Activated T-helper 1 cell treated with anti-CD3 and anti-CD28 coated beads, Interleukin-12 subunit alpha, Interleukin-12 subunit beta, Interleukin-2, Interleukin-4 antibody, amounts not matched to agents 30 ng/mL and 10 ng/mL and 1 ng/mL, durations not matched to agents 14 hours and 24 hours and 36 hours (primary cell): ENCODE measurements at regions of chr22 and their contacts with region 1.

Region 1: DNA sequence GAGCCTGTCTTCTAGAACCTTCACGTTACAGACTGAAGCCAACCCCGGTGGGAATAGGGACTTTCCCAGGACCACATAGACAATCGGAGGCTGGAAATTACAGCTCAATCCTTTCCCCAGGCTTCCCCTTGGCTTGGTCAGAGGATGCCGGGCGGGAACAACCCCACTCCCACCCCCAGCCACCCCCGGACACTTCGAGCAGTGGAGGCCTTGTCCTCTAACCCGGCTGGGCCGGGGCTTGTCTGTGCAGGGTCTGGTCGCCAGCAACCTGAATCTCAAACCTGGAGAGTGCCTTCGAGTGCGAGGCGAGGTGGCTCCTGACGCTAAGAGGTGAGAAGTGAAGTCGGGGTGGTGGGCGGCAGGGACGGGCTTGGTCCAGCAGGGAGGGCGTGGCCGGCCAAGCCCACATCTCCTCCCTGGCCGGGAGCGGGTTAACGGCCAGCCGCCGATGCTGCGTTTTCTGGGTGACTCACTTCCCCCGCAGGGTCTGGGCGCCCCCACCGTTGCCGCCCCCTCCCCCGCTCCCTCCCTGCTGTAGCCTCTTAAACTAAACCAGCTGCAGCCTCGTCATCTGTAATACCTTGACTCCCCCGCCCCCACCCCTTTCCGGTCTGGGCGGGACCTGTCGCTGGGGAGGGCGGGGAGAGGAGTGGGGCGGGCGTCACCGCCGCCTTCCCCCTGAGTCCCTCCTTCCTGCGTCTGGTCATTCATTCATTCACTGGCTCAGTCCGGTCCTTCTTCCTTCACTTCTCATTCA is 1.5 kb downstream of the LGALS1 start:
- DNase-seq: peak; percentile 89
- H3K4me3 Mint-ChIP-seq: peak overlapping the region; percentile 82
- H3K27ac Mint-ChIP-seq: peak overlapping the region; percentile 98
- H3K4me1 Mint-ChIP-seq: peaks cover 55% of the 10 kb centered on the region
- H3K27me3 Mint-ChIP-seq: no peaks in the 10 kb centered on the region

Region 2: DNA sequence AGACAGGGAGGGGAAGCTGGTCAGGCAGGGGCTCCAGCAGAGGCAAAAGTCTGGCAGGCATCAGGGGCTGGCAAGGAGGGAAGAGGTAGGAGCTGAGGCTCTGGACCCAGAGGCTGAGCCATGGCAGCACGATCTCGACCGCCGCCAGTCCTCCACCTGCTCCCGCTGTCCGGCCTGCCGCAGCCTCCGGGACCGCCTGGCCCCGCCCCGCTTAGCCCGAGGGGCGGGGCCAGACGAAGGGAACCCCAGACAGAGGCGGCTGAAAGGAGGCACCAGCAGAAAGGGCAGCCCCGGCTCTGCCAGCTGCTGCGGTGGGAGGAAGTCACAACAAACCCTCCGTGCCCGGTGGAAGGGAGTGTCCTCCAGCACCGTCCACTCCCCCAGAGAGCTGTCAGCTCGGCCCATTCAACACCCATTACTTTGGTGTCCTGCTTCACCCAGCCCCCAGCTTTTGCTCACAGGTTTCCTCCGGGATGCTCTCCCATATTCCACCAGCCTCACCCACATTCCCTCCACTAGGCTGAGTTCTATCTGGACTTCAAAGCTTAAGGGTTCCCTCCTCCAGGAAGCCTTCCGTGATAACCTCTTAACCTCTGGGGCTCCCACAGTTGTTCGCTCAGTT is 190.6 kb before region 1 on chr22 and contains the start of gene MFNG:
- intact Hi-C with region 1: loop called (anchors 5 kb)
- DNase-seq: peak; percentile 69
- H3K4me3 Mint-ChIP-seq: peak within 1 kb of the TSS; percentile 92
- H3K27ac Mint-ChIP-seq: peak within 1 kb of the TSS; percentile 93
- H3K4me1 Mint-ChIP-seq: peaks cover 44% of the 10 kb centered on the region
- H3K27me3 Mint-ChIP-seq: no peaks in the 10 kb centered on the region
- total RNA-seq, gene MFNG: 213 and 214 TPM in 2 replicates

Region 3: DNA sequence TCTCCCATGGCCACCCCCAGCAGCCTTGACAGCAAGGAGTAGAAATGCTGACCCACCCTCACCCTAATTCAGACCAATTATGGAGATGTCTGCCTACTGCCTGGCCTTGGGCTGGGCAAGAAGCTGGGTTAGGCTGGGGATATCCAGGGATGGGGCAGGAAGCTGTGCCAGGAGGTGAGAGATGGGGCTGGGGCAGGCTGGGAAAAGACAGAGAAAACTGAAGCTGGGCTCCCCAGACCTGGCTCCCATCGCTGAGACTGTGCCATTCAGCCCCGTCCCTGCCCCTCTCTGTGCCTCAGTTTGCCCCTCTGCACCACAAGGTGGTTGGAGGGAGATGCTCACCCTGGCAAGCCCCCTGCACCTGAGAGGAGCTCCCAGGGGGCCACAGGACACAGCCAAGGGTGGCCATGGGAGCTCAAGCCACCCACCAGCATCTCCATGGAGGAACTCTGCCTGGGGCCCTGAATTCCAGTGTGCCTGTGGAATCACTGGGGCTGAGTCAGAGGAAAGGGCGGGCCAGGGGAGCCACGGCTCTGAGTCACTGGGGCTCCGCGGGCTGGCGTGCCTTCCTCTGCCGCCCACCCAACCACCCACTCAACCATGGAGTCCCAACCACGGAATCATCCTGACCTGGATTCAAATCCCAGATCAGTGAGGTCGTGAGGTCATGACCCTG is 151.7 kb before region 1 on chr22:
- intact Hi-C with region 1: no loop called
- DNase-seq: no peak
- H3K4me3 Mint-ChIP-seq: no peak overlapping the region
- H3K27ac Mint-ChIP-seq: no peak overlapping the region
- H3K4me1 Mint-ChIP-seq: peaks cover 8% of the 10 kb centered on the region
- H3K27me3 Mint-ChIP-seq: peaks cover 32% of the 10 kb centered on the region

Region 4: GRCh38 chr22:37623075-37624016 is 53.6 kb before region 1 on chr22:
- intact Hi-C with region 1: loop called (anchors 1 kb)
- DNase-seq: peak; percentile 58
- H3K4me3 Mint-ChIP-seq: peak overlapping the region; percentile 37
- H3K27ac Mint-ChIP-seq: peak overlapping the region; percentile 70
- H3K4me1 Mint-ChIP-seq: peaks cover 37% of the 10 kb centered on the region
- H3K27me3 Mint-ChIP-seq: no peaks in the 10 kb centered on the region

Region 5: GRCh38 chr22:37658133-37659065 is 18.5 kb before region 1 on chr22 and contains the start of gene PDXP:
- intact Hi-C with region 1: loop called (anchors 1 kb)
- DNase-seq: peak; percentile 99
- H3K4me3 Mint-ChIP-seq: peak within 1 kb of the TSS; percentile 89
- H3K27ac Mint-ChIP-seq: peak within 1 kb of the TSS; percentile 91
- H3K4me1 Mint-ChIP-seq: peaks cover 43% of the 10 kb centered on the region
- H3K27me3 Mint-ChIP-seq: no peaks in the 10 kb centered on the region
- total RNA-seq, gene PDXP: 47.0 and 50.4 TPM in 2 replicates

Region 6: GRCh38 chr22:37807410-37808293 is 130.7 kb after region 1 on chr22 and contains the start of gene GCAT:
- intact Hi-C with region 1: loop called (anchors 2 kb)
- DNase-seq: peak; percentile 90
- H3K4me3 Mint-ChIP-seq: peak within 1 kb of the TSS; percentile 82
- H3K27ac Mint-ChIP-seq: peak within 1 kb of the TSS; percentile 58
- H3K4me1 Mint-ChIP-seq: peaks cover 44% of the 10 kb centered on the region
- H3K27me3 Mint-ChIP-seq: peaks cover 13% of the 10 kb centered on the region
- total RNA-seq, gene GCAT: 28.5 and 28.9 TPM in 2 replicates

Region 7: DNA sequence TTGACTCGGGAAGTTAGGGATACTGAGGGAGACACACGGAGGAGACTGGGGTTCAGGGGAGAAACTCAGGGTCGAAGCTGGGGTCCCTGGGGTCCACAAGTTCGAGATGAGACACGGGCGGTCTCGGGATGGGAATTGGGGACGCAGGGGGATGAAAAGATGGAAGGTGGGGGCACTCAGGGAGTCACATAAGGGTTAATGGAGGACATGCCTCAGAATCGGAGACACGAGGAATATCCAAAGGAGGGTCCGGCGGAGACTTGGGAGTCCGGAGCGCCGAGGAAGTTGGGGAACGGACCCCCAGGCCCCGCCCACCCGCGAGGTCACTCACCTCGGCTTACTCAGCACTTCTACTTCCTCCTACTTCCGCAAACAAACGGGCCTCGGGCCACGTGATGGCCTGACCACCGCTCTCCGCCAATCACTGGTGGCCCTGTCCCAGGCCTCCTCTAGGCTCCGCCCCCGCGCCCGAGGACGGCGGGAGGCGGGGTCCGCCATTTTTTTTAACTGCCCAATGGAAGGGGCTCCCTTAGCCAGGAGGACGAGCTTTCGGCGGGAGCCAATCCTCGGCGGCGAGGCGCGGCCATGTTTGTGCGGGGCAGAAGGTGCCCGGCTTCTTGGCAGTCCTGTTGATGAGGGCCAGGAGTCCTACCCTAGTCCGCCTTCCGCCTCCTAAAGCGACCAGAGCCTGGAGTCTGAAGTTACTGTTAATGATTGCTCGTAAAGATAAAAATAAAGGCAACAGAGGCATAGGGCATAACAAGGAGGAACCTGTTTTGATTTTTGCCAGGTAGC is 504.7 kb after region 1 on chr22 and contains the start of gene PLA2G6:
- intact Hi-C with region 1: loop called (anchors 2 kb)
- DNase-seq: peak; percentile 99
- H3K4me3 Mint-ChIP-seq: peak within 1 kb of the TSS; percentile 89
- H3K27ac Mint-ChIP-seq: peak within 1 kb of the TSS; percentile 95
- H3K4me1 Mint-ChIP-seq: peaks cover 48% of the 10 kb centered on the region
- H3K27me3 Mint-ChIP-seq: peaks cover 10% of the 10 kb centered on the region
- total RNA-seq, gene PLA2G6: 34.8 and 34.9 TPM in 2 replicates